ENCODE measurements at regions of chr3 and their contacts with region 1.

Region 1: GRCh38 chr3:115141033-115141757 is 5.9 kb downstream of the ZBTB20 start:
- DNase-seq: no peak
- H3K4me3 Mint-ChIP-seq: no peak overlapping the region
- H3K27ac Mint-ChIP-seq: no peak overlapping the region
- H3K4me1 Mint-ChIP-seq: no peaks in the 10 kb centered on the region
- H3K27me3 Mint-ChIP-seq: no peaks in the 10 kb centered on the region
- CTCF ChIP-seq: no peak

Region 2: GRCh38 chr3:114839476-114839875 is 301.7 kb before region 1 on chr3:
- CTCF ChIA-PET with region 1: no interaction called
- intact Hi-C with region 1: no loop called
- DNase-seq: no peak
- H3K4me3 Mint-ChIP-seq: no peak overlapping the region
- H3K27ac Mint-ChIP-seq: no peak overlapping the region
- H3K4me1 Mint-ChIP-seq: no peaks in the 10 kb centered on the region
- H3K27me3 Mint-ChIP-seq: no peaks in the 10 kb centered on the region
- CTCF ChIP-seq: no peak

Region 3: GRCh38 chr3:115074502-115074901 is 66.7 kb before region 1 on chr3:
- CTCF ChIA-PET with region 1: no interaction called
- intact Hi-C with region 1: no loop called
- DNase-seq: no peak
- H3K4me3 Mint-ChIP-seq: no peak overlapping the region
- H3K27ac Mint-ChIP-seq: no peak overlapping the region
- H3K4me1 Mint-ChIP-seq: peaks cover 33% of the 10 kb centered on the region
- H3K27me3 Mint-ChIP-seq: no peaks in the 10 kb centered on the region
- CTCF ChIP-seq: no peak

Region 4: GRCh38 chr3:115099986-115100571 is 41.1 kb before region 1 on chr3:
- CTCF ChIA-PET with region 1: no interaction called
- intact Hi-C with region 1: loop called (anchors 5 kb)
- DNase-seq: peak; percentile 14
- H3K4me3 Mint-ChIP-seq: peak overlapping the region; percentile 51
- H3K27ac Mint-ChIP-seq: peak overlapping the region; percentile 84
- H3K4me1 Mint-ChIP-seq: peaks cover 16% of the 10 kb centered on the region
- H3K27me3 Mint-ChIP-seq: no peaks in the 10 kb centered on the region
- CTCF ChIP-seq: no peak

Region 5: GRCh38 chr3:115226844-115227445 is 85.8 kb after region 1 on chr3:
- CTCF ChIA-PET with region 1: no interaction called
- intact Hi-C with region 1: no loop called
- DNase-seq: no peak
- H3K4me3 Mint-ChIP-seq: no peak overlapping the region
- H3K27ac Mint-ChIP-seq: no peak overlapping the region
- H3K4me1 Mint-ChIP-seq: no peaks in the 10 kb centered on the region
- H3K27me3 Mint-ChIP-seq: no peaks in the 10 kb centered on the region
- CTCF ChIP-seq: no peak

Region 6: GRCh38 chr3:115922681-115923347 is 781.6 kb after region 1 on chr3:
- CTCF ChIA-PET with region 1: no interaction called
- intact Hi-C with region 1: no loop called
- DNase-seq: peak; percentile 17
- H3K4me3 Mint-ChIP-seq: no peak overlapping the region
- H3K27ac Mint-ChIP-seq: no peak overlapping the region
- H3K4me1 Mint-ChIP-seq: no peaks in the 10 kb centered on the region
- H3K27me3 Mint-ChIP-seq: no peaks in the 10 kb centered on the region
- CTCF ChIP-seq: peak; percentile 51

Measured in Calu3 (cell line).